ENCODE measurements at regions of chr6 and their contacts with region 1.

Region 1: DNA sequence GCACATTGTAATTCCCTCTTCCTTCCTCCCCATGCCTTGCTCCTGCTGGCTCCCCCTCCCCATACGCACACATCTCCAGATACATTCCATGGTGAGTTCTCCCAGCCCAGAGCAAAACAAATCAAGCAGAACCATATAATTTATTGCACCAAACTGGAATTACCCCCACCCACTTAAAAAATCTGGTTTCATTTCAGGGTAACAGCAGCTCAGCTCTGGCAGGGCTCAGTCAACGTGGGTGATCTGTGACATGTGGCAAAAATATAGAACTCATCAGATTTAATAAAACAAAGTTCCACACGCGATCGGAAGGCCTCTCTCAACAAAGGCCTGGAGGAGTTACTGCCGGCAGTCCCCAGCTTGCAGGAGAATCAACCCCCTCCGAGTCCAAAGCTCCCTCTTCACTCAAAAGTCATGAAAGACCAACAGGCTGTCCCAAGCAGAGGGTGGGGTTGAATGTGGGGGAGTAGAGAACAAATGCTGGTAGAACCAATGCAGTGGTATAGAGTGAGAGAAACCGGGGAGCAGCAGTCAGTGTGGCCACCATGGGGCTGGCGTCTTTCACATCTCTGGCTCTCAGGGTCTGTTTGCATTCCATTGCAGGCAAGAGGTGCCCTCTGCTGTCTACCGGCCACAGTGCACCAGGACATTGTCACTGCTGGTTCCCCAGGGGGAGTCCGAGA is 323.3 kb upstream of the NT5E start:
- DNase-seq: peak; percentile 52
- ATAC-seq: peak; percentile 100
- H3K4me3 ChIP-seq: no peak overlapping the region; a peak in 1 of 6 replicates
- H3K27ac ChIP-seq: no peak overlapping the region
- H3K4me1 ChIP-seq: no peaks in the 10 kb centered on the region
- H3K27me3 ChIP-seq: no peaks in the 10 kb centered on the region
- CTCF ChIP-seq: peak; percentile 90
- EP300 ChIP-seq: no peak
- POLR2A ChIP-seq: no peak
- RAD21 ChIP-seq: peak; percentile 73

Region 2: DNA sequence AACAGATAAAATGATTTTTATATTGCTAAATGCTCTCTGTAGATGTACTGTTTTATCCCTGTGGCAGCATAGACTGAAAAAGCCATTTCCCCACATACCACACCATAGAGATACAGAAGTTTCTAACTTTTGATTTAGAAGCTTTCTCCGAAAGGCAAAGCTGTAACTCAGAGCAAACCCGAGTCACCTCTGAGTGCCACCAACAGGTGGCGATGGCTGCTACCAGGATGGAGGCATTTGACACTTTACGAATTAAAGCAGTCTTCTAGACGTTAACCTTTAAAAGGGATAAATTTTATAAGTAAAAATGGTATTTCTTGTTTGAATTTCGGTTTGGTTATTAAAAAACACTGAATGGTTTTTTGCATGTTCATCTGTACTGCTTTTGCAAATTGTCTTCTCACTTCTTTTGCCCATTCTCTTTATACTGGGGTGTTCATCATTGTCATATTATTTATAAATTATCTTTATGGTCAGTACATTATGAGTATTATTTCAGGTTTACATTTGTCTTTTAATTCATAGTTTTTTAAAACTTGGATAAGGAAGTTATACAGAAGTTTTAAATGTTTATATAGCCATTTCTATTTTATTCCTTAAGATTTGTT is 698.2 kb before region 1 on chr6:
- CTCF ChIA-PET with region 1: no interaction called
- POLR2A ChIA-PET with region 1: no interaction called
- in situ Hi-C with region 1: no loop called
- intact Hi-C with region 1: loop called (anchors 5 kb)
- DNase-seq: peak; percentile 16
- ATAC-seq: peak; percentile 72
- H3K4me3 ChIP-seq: no peak overlapping the region
- H3K27ac ChIP-seq: no peak overlapping the region
- H3K4me1 ChIP-seq: no peaks in the 10 kb centered on the region
- H3K27me3 ChIP-seq: no peaks in the 10 kb centered on the region; a peak in 1 of 5 replicates
- CTCF ChIP-seq: peak; percentile 70
- EP300 ChIP-seq: no peak
- POLR2A ChIP-seq: no peak
- RAD21 ChIP-seq: peak; percentile 36; the same call in 1 of the 2 replicates

Region 3: GRCh38 chr6:85015396-85015990 is 111.1 kb before region 1 on chr6:
- CTCF ChIA-PET with region 1: no interaction called
- POLR2A ChIA-PET with region 1: no interaction called
- in situ Hi-C with region 1: no loop called
- intact Hi-C with region 1: loop called (anchors 5 kb)
- DNase-seq: peak; percentile 26
- ATAC-seq: peak; percentile 99
- H3K4me3 ChIP-seq: no peak overlapping the region
- H3K27ac ChIP-seq: no peak overlapping the region
- H3K4me1 ChIP-seq: no peaks in the 10 kb centered on the region
- H3K27me3 ChIP-seq: 0 out of 5 replicates have a peak, but pooled peaks cover 0 to 6% of the 10 kb centered on the region in 2 experiments
- CTCF ChIP-seq: peak; percentile 54
- EP300 ChIP-seq: no peak
- POLR2A ChIP-seq: no peak
- RAD21 ChIP-seq: 0 out of 2 replicates have a peak, but pooled peaks have one; percentile 22

Region 4: DNA sequence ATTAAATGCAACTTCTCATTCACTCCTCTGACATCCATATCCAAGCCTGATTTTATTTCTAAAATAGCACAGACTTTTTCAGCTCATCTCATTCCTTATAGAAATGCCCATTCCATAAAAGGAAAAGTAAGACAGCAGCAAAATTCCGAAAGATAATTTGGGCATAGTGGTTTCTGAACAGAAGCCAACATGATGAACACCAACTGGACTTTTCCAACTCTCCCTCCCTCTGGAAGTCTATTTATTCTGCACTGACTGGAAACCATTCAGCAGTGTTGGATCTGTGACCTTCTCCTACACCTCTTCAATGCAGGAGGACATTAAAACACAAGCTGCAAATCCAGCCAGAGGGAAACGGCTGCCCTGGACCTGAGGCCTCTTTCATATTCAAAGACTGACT is 17.1 kb after region 1 on chr6:
- CTCF ChIA-PET with region 1: no interaction called
- POLR2A ChIA-PET with region 1: no interaction called
- in situ Hi-C with region 1: no loop called
- intact Hi-C with region 1: no loop called
- DNase-seq: no peak
- ATAC-seq: no peak
- H3K4me3 ChIP-seq: no peak overlapping the region
- H3K27ac ChIP-seq: no peak overlapping the region
- H3K4me1 ChIP-seq: no peaks in the 10 kb centered on the region
- H3K27me3 ChIP-seq: no peaks in the 10 kb centered on the region
- CTCF ChIP-seq: no peak
- EP300 ChIP-seq: no peak
- POLR2A ChIP-seq: no peak
- RAD21 ChIP-seq: no peak